ENCODE measurements at regions of chr17 and their contacts with region 1.

Region 1: GRCh38 chr17:8057691-8058114 is 18.8 kb downstream of the ALOX15B start:
- DNase-seq: peak in 1 of 2 experiments; percentile 56
- H3K4me3 ChIP-seq: peak overlapping the region in 1 of 4 experiments; percentile 34; a peak in 2 of 8 replicates
- H3K27ac ChIP-seq: no peak overlapping the region
- H3K4me1 ChIP-seq: peaks cover 0 to 12% (median 7%) of the 10 kb centered on the region in 4 experiments; a peak in 4 of 7 replicates
- H3K27me3 ChIP-seq: peaks cover 1 to 16% (median 13%) of the 10 kb centered on the region in 4 experiments; a peak in 5 of 7 replicates
- CTCF ChIP-seq: peak in 2 of 3 experiments; percentile 81 to 88; a peak in 3 of 4 replicates
- EP300 ChIP-seq: no peak
- POLR2A ChIP-seq: no peak
- RAD21 ChIP-seq: peak; percentile 92 to 96

Region 2: DNA sequence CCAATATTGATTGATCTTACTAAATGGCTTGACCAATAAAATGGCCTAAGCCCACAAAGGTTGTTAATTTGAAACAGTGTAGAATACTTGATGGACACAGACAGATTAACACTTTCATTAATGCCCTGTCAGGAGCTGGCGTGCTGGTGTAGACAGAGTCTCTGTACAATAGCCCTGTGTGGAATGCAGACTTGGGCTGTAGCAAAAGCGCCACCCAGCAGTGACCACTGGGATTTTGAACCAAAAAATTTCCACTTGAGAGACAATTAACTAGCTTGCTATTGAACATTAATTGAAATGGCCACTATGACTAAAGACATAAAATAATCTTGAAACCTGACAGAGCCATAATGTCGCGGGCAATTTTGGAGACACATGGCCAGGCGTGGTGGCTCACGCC is 75.0 kb before region 1 on chr17:
- CTCF ChIA-PET with region 1: interaction called, 15 read pairs
- POLR2A ChIA-PET with region 1: no interaction called
- DNase-seq: no peak
- H3K4me3 ChIP-seq: no peak overlapping the region
- H3K27ac ChIP-seq: no peak overlapping the region
- H3K4me1 ChIP-seq: no peaks in the 10 kb centered on the region
- H3K27me3 ChIP-seq: peaks cover 0 to 3% (median 0%) of the 10 kb centered on the region in 4 experiments; a peak in 1 of 7 replicates
- CTCF ChIP-seq: peak in 2 of 3 experiments; percentile 16 to 21; a peak in 2 of 4 replicates
- EP300 ChIP-seq: no peak
- POLR2A ChIP-seq: no peak
- RAD21 ChIP-seq: peak; percentile 28 to 51

Region 3: GRCh38 chr17:8041249-8041928 is 16.3 kb before region 1 on chr17:
- CTCF ChIA-PET with region 1: interaction called, 43 read pairs
- POLR2A ChIA-PET with region 1: interaction called, 3 read pairs
- DNase-seq: no peak
- H3K4me3 ChIP-seq: no peak overlapping the region
- H3K27ac ChIP-seq: no peak overlapping the region
- H3K4me1 ChIP-seq: peaks cover 0 to 10% (median 6%) of the 10 kb centered on the region in 4 experiments; a peak in 5 of 7 replicates
- H3K27me3 ChIP-seq: peaks cover 0 to 9% (median 4%) of the 10 kb centered on the region in 4 experiments; a peak in 3 of 7 replicates
- CTCF ChIP-seq: peak in 2 of 3 experiments; percentile 59 to 72; a peak in 3 of 4 replicates
- EP300 ChIP-seq: no peak
- POLR2A ChIP-seq: no peak
- RAD21 ChIP-seq: peak; percentile 86 to 87

Region 4: GRCh38 chr17:8091033-8091687 is 33.5 kb after region 1 on chr17:
- CTCF ChIA-PET with region 1: interaction called, 72 read pairs
- POLR2A ChIA-PET with region 1: no interaction called
- DNase-seq: no peak
- H3K4me3 ChIP-seq: no peak overlapping the region
- H3K27ac ChIP-seq: no peak overlapping the region
- H3K4me1 ChIP-seq: peaks cover 0 to 7% (median under 1%) of the 10 kb centered on the region in 4 experiments; a peak in 5 of 7 replicates
- H3K27me3 ChIP-seq: peaks cover 0 to 10% (median 4%) of the 10 kb centered on the region in 4 experiments; a peak in 4 of 7 replicates
- CTCF ChIP-seq: no peak
- EP300 ChIP-seq: no peak
- POLR2A ChIP-seq: no peak
- RAD21 ChIP-seq: no peak

Region 5: GRCh38 chr17:8125157-8125946 is 67.6 kb after region 1 on chr17:
- CTCF ChIA-PET with region 1: interaction called, 83 read pairs
- POLR2A ChIA-PET with region 1: interaction called, 6 read pairs
- DNase-seq: peak in 1 of 2 experiments; percentile 99
- H3K4me3 ChIP-seq: peak overlapping the region; percentile 54 to 89 (median 82)
- H3K27ac ChIP-seq: no peak overlapping the region
- H3K4me1 ChIP-seq: peaks cover 0 to 24% (median 13%) of the 10 kb centered on the region in 4 experiments; a peak in 6 of 7 replicates
- H3K27me3 ChIP-seq: peaks cover 30 to 54% (median 51%) of the 10 kb centered on the region in 4 experiments
- CTCF ChIP-seq: no peak
- EP300 ChIP-seq: no peak
- POLR2A ChIP-seq: no peak
- RAD21 ChIP-seq: no peak

Region 6: GRCh38 chr17:8151123-8151640 is 93.5 kb after region 1 on chr17:
- CTCF ChIA-PET with region 1: no interaction called
- POLR2A ChIA-PET with region 1: no interaction called
- DNase-seq: peak in 1 of 2 experiments; percentile 81
- H3K4me3 ChIP-seq: peak overlapping the region; percentile 79 to 93 (median 84)
- H3K27ac ChIP-seq: no peak overlapping the region
- H3K4me1 ChIP-seq: peaks cover 12 to 31% (median 19%) of the 10 kb centered on the region in 4 experiments
- H3K27me3 ChIP-seq: no peaks in the 10 kb centered on the region
- CTCF ChIP-seq: no peak
- EP300 ChIP-seq: no peak
- POLR2A ChIP-seq: no peak
- RAD21 ChIP-seq: no peak